Caco-2 (cell line): ENCODE measurements at regions of chr1 and their contacts with region 1.

Region 1: GRCh38 chr1:115112496-115113375 is 23.4 kb upstream of the TSPAN2 start:
- DNase-seq: peak in 1 of 2 experiments; percentile 55
- H3K4me3 ChIP-seq: no peak overlapping the region
- H3K4me3 Mint-ChIP-seq: no peak overlapping the region
- H3K27ac Mint-ChIP-seq: no peak overlapping the region
- H3K4me1 ChIP-seq: peaks cover 11% of the 10 kb centered on the region
- H3K4me1 Mint-ChIP-seq: peaks cover 4% of the 10 kb centered on the region
- H3K27me3 ChIP-seq: no peaks in the 10 kb centered on the region
- H3K27me3 Mint-ChIP-seq: no peaks in the 10 kb centered on the region
- CTCF ChIP-seq: peak; percentile 73 to 83

Region 2: DNA sequence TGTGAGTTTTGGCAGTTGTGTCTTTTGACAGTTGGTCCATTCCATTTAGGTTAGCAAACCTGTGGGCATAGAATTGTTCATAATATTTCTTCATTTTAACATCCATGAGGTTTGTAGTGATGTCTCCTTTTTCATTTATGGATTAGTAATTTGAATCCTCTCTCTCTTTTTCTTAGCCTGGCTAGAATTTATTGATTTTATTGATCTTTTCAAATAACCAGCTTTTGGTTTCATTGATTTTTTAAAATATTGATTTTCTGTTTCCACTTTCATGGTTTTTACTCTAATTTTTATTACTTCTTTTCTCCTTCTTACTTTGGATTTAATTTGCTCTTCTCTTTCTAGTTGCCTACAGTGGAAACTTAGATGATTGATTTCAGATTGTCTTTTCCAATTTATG is 244.0 kb before region 1 on chr1:
- CTCF ChIA-PET with region 1: no interaction called
- POLR2A ChIA-PET with region 1: no interaction called
- intact Hi-C with region 1: no loop called
- DNase-seq: no peak
- H3K4me3 ChIP-seq: no peak overlapping the region
- H3K4me3 Mint-ChIP-seq: no peak overlapping the region
- H3K27ac Mint-ChIP-seq: no peak overlapping the region
- H3K4me1 ChIP-seq: no peaks in the 10 kb centered on the region
- H3K4me1 Mint-ChIP-seq: no peaks in the 10 kb centered on the region
- H3K27me3 ChIP-seq: no peaks in the 10 kb centered on the region
- H3K27me3 Mint-ChIP-seq: peaks cover 5% of the 10 kb centered on the region
- CTCF ChIP-seq: no peak

Region 3: GRCh38 chr1:114979278-114979891 is 133.4 kb before region 1 on chr1:
- CTCF ChIA-PET with region 1: no interaction called
- POLR2A ChIA-PET with region 1: no interaction called
- intact Hi-C with region 1: loop called (anchors 1 kb)
- DNase-seq: peak; percentile 49 to 60
- H3K4me3 ChIP-seq: no peak overlapping the region
- H3K4me3 Mint-ChIP-seq: no peak overlapping the region
- H3K27ac Mint-ChIP-seq: no peak overlapping the region
- H3K4me1 ChIP-seq: no peaks in the 10 kb centered on the region
- H3K4me1 Mint-ChIP-seq: no peaks in the 10 kb centered on the region
- H3K27me3 ChIP-seq: no peaks in the 10 kb centered on the region
- H3K27me3 Mint-ChIP-seq: no peaks in the 10 kb centered on the region
- CTCF ChIP-seq: peak; percentile 42 to 54

Region 4: GRCh38 chr1:115052454-115053083 is 60.2 kb before region 1 on chr1:
- CTCF ChIA-PET with region 1: no interaction called
- POLR2A ChIA-PET with region 1: no interaction called
- intact Hi-C with region 1: loop called (anchors 1 kb)
- DNase-seq: peak; percentile 58 to 59
- H3K4me3 ChIP-seq: no peak overlapping the region
- H3K4me3 Mint-ChIP-seq: no peak overlapping the region
- H3K27ac Mint-ChIP-seq: no peak overlapping the region
- H3K4me1 ChIP-seq: peaks cover 16% of the 10 kb centered on the region
- H3K4me1 Mint-ChIP-seq: no peaks in the 10 kb centered on the region
- H3K27me3 ChIP-seq: no peaks in the 10 kb centered on the region
- H3K27me3 Mint-ChIP-seq: no peaks in the 10 kb centered on the region
- CTCF ChIP-seq: peak; percentile 49 to 50

Region 5: DNA sequence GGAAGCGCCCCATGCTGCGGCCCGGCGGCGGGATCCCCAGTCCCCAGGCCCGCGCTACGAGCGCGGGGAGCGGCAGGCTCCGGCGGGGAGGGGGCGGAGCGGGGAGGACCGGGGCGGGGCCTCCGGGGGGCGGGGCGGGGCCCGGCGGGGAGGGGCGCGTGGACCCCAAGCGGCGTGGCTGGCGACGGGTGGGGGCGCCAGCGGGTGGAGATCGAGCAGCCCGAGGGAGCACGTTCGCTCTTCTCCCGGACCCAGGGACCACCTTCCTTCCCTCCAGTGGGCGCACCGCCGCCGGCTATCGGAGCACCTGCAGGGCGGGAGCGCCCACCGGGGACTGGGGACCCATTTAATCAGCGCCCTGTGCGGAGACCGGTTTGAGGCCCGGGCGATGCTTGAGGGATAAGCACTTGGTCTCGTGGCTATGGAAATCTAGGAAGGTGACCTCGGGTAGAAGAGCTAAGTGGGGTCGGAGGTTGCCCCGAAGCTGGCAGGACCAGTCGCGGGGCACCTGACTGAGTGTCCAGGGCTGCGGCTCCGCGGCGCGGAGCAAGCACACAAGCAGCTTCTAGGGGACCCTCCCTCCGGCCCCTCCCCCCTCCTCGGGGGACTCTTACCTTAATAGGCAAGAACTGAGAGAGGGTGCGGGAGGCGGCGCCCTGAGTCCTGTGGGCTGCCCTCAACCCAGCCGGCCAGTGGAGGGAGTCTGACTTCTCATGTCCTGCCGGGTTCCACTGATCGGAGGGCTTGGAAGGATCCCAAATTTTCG is 23.1 kb before region 1 on chr1 and contains the start of gene TSPAN2:
- CTCF ChIA-PET with region 1: interaction called, 5 read pairs
- POLR2A ChIA-PET with region 1: no interaction called
- intact Hi-C with region 1: loop called (anchors 2 kb)
- DNase-seq: peak; percentile 74 to 75
- H3K4me3 ChIP-seq: peak within 1 kb of the TSS; percentile 55
- H3K4me3 Mint-ChIP-seq: peak within 1 kb of the TSS; percentile 74
- H3K27ac Mint-ChIP-seq: no peak within 1 kb of the TSS
- H3K4me1 ChIP-seq: 0 out of 2 replicates have a peak, but pooled peaks cover 3% of the 10 kb centered on the region
- H3K4me1 Mint-ChIP-seq: peaks cover 6% of the 10 kb centered on the region
- H3K27me3 ChIP-seq: no peaks in the 10 kb centered on the region
- H3K27me3 Mint-ChIP-seq: no peaks in the 10 kb centered on the region
- CTCF ChIP-seq: peak in 1 of 2 experiments; percentile 23
- total RNA-seq, gene TSPAN2: 6.8 and 6.9 TPM in 2 replicates

Region 6: GRCh38 chr1:115138968-115139367 is 26.2 kb after region 1 on chr1:
- CTCF ChIA-PET with region 1: no interaction called
- POLR2A ChIA-PET with region 1: no interaction called
- intact Hi-C with region 1: no loop called
- DNase-seq: peak; percentile 76
- H3K4me3 ChIP-seq: no peak overlapping the region
- H3K4me3 Mint-ChIP-seq: no peak overlapping the region
- H3K27ac Mint-ChIP-seq: no peak overlapping the region
- H3K4me1 ChIP-seq: peaks cover 13% of the 10 kb centered on the region
- H3K4me1 Mint-ChIP-seq: peaks cover 29% of the 10 kb centered on the region
- H3K27me3 ChIP-seq: no peaks in the 10 kb centered on the region
- H3K27me3 Mint-ChIP-seq: no peaks in the 10 kb centered on the region
- CTCF ChIP-seq: peak; percentile 66 to 73

Region 7: DNA sequence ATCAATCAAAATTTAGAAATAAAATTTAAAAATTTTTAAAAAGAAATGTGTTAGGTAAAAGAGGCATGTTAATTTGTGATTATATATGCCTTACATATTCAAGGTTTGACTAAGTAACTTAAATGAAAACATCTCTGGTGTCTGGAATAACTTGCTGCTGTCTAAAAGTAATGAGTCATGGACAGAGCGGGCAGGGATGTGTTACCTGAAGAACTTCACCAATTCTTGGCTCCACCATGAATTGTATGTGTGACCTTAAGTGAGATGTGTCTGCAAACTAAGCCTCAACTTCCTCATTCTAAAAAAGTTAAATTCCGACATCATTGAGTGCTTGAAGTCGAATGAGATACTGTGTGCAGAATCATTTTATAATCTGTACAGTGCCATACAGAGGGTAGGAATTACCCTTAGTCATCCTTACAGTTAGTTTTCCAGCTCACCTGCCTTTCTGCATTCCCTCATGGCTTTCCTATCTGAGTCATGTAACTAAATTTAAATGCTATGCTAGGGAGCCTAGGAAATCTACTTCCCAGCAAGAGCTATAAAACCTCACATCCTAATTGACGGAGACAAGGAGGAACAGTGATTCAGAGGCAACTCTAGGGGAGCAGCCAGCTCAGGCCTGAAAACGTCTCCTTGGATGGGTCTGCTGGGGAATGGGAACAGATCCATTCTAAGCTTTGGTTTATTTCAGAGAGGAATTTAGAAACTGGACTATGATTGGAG is 77.2 kb after region 1 on chr1:
- CTCF ChIA-PET with region 1: no interaction called
- POLR2A ChIA-PET with region 1: no interaction called
- intact Hi-C with region 1: no loop called
- DNase-seq: no peak
- H3K4me3 ChIP-seq: no peak overlapping the region
- H3K4me3 Mint-ChIP-seq: no peak overlapping the region
- H3K27ac Mint-ChIP-seq: no peak overlapping the region
- H3K4me1 ChIP-seq: no peaks in the 10 kb centered on the region; the same call in 1 of the 2 replicates
- H3K4me1 Mint-ChIP-seq: peaks cover 22% of the 10 kb centered on the region
- H3K27me3 ChIP-seq: no peaks in the 10 kb centered on the region
- H3K27me3 Mint-ChIP-seq: no peaks in the 10 kb centered on the region
- CTCF ChIP-seq: no peak

Region 8: GRCh38 chr1:115373305-115373704 is 260.6 kb after region 1 on chr1:
- CTCF ChIA-PET with region 1: no interaction called
- POLR2A ChIA-PET with region 1: no interaction called
- intact Hi-C with region 1: no loop called
- DNase-seq: no peak
- H3K4me3 ChIP-seq: no peak overlapping the region
- H3K4me3 Mint-ChIP-seq: no peak overlapping the region
- H3K27ac Mint-ChIP-seq: no peak overlapping the region
- H3K4me1 ChIP-seq: no peaks in the 10 kb centered on the region
- H3K4me1 Mint-ChIP-seq: no peaks in the 10 kb centered on the region
- H3K27me3 ChIP-seq: no peaks in the 10 kb centered on the region
- H3K27me3 Mint-ChIP-seq: no peaks in the 10 kb centered on the region
- CTCF ChIP-seq: no peak